ENCODE measurements at regions of chr12 and their contacts with region 1.

Region 1: DNA sequence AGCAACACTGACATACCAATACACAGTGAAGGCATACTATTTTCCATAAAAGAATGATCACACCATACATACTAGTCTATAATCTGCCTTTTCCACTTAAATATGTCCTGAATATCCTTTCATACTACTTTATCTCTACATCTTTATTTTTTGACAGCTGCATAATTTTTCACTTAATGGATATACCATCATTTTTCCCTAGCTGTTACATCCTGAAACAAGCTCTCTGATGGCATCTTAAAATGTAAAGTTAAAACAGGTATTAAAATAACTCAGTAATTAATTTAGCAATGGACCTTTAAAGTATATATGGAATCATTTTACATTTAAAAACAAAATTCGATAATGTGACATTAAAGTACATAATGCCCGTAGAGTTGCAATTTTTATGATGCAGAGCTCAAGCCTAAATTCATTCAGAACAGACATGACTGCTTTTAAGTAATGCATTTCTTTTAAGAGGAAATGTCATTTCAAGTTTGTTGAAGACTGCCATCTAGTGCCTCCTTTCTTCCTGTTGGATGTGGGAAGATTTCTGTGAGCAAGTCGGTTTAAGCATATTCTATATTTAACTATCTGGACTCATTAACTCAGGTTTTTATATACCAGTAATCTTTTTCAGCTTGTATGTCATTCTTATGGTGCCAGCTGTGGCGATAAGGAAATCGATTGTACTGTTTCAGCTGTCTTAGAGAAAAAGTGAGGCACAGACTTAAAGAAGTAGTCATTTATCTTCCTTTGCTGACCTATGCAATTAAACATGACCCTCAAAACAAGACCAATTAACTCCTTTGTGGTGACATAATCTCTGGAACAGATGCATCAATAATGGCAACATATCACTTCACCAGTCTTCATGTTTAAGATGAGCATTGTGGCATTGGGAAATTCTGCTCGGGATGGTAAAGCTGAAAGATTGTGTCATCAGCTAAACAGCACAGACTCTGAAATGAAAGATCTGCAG is 20.3 kb downstream of the PRICKLE1 start:
- DNase-seq: no peak
- H3K4me3 ChIP-seq: no peak overlapping the region
- H3K27ac ChIP-seq: no peak overlapping the region
- H3K4me1 ChIP-seq: no peaks in the 10 kb centered on the region
- H3K27me3 ChIP-seq: no peaks in the 10 kb centered on the region
- CTCF ChIP-seq: peak; percentile 35 to 51

Region 2: DNA sequence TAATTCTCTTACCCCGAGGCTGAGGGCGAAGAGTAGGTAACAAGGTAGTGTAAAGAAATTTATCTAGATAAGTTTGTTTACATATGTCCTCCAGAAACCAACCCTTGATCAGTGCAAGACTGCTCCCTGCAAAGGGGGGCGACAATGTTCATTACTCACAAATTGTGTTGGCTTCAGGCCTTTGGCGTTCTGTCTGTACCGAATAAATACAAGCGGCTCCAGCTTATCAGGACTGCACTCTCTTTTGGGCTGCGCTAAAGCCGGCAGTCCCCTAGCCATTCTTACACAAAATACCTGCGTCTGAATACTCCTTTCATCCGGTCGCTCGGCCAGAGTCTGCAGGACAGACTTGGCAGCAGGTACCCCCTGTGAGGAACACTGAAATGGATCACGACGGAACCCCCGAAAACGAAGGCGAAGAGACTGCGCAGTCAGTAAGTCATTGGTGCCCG is 126.9 kb before region 1 on chr12:
- intact Hi-C with region 1: no loop called
- DNase-seq: no peak
- H3K4me3 ChIP-seq: no peak overlapping the region
- H3K27ac ChIP-seq: no peak overlapping the region
- H3K4me1 ChIP-seq: peaks cover 0 to 3% (median 1%) of the 10 kb centered on the region in 4 donors
- H3K27me3 ChIP-seq: no peaks in the 10 kb centered on the region
- CTCF ChIP-seq: no peak

Region 3: GRCh38 chr12:42482445-42483237 is 86.6 kb before region 1 on chr12:
- intact Hi-C with region 1: loop called (anchors 5 kb)
- DNase-seq: peak; percentile 56 to 82
- H3K4me3 ChIP-seq: peak overlapping the region; percentile 65 to 82
- H3K27ac ChIP-seq: peak overlapping the region; percentile 53 to 74
- H3K4me1 ChIP-seq: peaks cover 0 to 24% (median 8%) of the 10 kb centered on the region in 4 donors
- H3K27me3 ChIP-seq: no peaks in the 10 kb centered on the region
- CTCF ChIP-seq: peak; percentile 83 to 84

Region 4: GRCh38 chr12:42524716-42525115 is 44.5 kb before region 1 on chr12:
- intact Hi-C with region 1: loop called (anchors 1 kb)
- DNase-seq: no peak
- H3K4me3 ChIP-seq: no peak overlapping the region
- H3K27ac ChIP-seq: no peak overlapping the region
- H3K4me1 ChIP-seq: no peaks in the 10 kb centered on the region
- H3K27me3 ChIP-seq: no peaks in the 10 kb centered on the region
- CTCF ChIP-seq: no peak